AG04449 (cell line): ENCODE measurements at regions of chr1 and their contacts with region 1.

Region 1: GRCh38 chr1:235971571-235972310 is 93.1 kb downstream of the NID1 start:
- DNase-seq: peak; percentile 74
- H3K4me3 ChIP-seq: peak overlapping the region; percentile 52
- CTCF ChIP-seq: peak; percentile 84

Region 2: GRCh38 chr1:235513495-235514366 is 458.0 kb before region 1 on chr1:
- CTCF ChIA-PET with region 1: interaction called, 13 read pairs
- POLR2A ChIA-PET with region 1: no interaction called
- DNase-seq: no peak
- H3K4me3 ChIP-seq: no peak overlapping the region
- CTCF ChIP-seq: peak; percentile 63

Region 3: DNA sequence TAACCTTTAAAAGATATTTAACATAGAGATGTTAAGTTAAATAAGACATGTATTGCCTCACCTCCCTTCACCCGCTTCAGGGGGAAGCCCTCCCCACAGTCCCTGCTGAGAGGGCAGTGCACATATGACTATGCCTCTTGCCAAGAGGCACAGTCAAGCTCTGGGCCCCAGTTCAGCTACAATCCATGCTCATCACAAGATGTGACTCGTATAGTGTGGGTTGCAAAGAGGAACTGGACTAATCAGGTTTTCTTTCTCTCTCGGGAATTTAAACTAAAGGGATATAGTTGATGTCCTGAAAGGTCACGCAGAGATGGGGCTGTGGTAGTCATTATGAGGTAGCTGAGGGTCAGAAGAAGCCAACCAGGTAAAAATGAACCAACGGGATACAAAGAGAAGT is 140.6 kb before region 1 on chr1:
- CTCF ChIA-PET with region 1: interaction called, 11 read pairs
- POLR2A ChIA-PET with region 1: no interaction called
- DNase-seq: peak; percentile 28
- H3K4me3 ChIP-seq: no peak overlapping the region
- CTCF ChIP-seq: no peak

Region 4: DNA sequence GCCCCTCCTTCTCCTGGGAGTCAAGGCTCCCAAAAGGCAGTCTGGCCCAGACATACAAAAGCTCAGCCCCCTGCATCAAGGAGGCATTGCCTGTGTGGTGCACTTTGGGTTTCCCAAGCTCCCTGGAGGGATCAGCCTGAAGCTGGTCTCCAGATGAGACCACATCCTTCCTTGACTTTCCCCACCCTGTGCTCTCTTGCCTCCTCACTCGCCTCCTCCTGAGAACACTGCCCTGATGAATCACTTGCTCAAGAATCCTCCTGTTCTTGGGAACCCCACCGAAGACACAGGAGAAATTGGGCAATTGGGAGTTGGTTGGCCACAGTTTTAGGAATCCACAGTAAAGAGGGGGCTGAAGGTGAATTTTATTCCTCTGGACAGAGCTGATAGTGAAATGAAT is 70.3 kb before region 1 on chr1:
- CTCF ChIA-PET with region 1: interaction called, 13 read pairs
- POLR2A ChIA-PET with region 1: no interaction called
- DNase-seq: peak; percentile 67
- H3K4me3 ChIP-seq: no peak overlapping the region
- CTCF ChIP-seq: no peak

Region 5: GRCh38 chr1:235947989-235948388 is 23.8 kb before region 1 on chr1:
- CTCF ChIA-PET with region 1: interaction called, 13 read pairs
- POLR2A ChIA-PET with region 1: interaction called, 4 read pairs
- DNase-seq: no peak
- H3K4me3 ChIP-seq: no peak overlapping the region
- CTCF ChIP-seq: no peak

Region 6: DNA sequence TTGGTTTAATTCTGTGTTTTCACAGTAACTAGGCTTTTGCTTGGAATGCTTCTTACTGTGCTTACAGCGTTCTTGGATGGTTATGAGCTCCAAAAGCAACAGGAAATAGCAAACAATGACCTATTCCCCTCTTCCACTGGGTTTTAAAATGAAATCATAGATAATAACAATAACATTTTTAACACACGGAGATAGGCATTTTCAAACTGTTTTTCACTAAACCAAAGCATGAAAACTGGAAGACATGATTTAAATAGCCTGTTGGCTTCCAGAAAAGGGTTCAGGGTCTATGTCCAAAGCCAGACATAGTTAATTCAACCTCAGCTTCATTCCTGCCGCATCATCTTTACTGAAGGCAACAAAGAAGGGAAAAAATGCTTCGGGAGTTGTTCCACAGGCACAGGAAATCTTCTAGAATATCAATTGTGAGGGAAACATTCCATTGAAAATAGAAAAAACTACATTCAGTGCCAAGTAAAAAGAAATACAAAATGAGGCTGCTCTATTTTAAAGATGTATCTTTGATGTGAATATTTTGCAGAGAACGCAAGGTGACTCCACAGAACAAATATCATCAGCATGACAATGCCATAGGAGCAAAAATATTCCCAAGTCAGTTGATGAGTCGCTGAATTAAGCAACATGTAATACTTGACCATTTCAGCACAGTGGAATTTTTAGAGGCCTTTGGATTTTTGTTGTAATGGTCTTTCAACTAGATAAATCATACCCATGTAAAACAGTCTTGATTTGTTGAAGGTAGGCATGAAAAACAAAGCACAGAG is 12.5 kb after region 1 on chr1:
- CTCF ChIA-PET with region 1: interaction called, 20 read pairs
- POLR2A ChIA-PET with region 1: interaction called, 10 read pairs
- DNase-seq: peak; percentile 72
- H3K4me3 ChIP-seq: no peak overlapping the region; the same call in 1 of the 2 replicates
- CTCF ChIP-seq: no peak

Region 7: GRCh38 chr1:236052232-236052993 is 80.7 kb after region 1 on chr1:
- CTCF ChIA-PET with region 1: no interaction called
- POLR2A ChIA-PET with region 1: no interaction called
- DNase-seq: no peak
- H3K4me3 ChIP-seq: no peak overlapping the region
- CTCF ChIP-seq: no peak

Region 8: DNA sequence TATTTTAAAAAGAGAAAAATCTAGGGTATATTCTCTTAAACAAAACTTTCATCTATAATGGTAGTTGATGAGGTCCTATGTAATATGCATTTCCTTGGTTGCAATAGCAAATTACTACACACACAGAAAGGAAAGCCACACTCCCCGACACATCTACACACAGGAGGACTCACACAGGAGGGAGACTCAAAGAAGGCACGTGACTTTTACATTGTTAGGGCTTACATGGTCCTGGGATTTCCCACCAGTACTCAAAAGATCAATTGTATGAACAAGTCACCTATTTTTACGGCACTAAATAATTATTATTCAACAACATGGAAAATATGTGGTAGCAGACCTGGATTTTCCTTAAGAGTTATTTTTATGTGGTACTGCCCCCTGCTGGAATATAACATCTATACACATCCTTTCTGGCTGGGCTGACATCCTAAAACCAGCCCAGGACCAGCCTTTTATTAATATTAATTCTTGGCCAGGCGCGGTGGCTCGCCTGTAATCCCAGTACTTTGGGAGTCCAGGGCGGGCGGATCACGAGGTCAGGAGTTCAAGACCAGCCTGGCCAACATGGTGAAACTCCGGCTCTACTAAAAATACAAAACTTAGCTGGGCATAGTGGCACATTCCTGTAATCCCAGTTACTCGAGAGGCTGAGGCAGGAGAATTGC is 518.1 kb after region 1 on chr1:
- CTCF ChIA-PET with region 1: no interaction called
- POLR2A ChIA-PET with region 1: no interaction called
- DNase-seq: no peak
- H3K4me3 ChIP-seq: no peak overlapping the region
- CTCF ChIP-seq: peak; percentile 38